ENCODE measurements at regions of chr10 and their contacts with region 1.

Region 1: GRCh38 chr10:102432162-102432950 is at the start of gene CUEDC2:
- DNase-seq: peak; percentile 98
- ATAC-seq: peak; percentile 96
- total RNA-seq, gene CUEDC2: 84.5 TPM

Region 2: DNA sequence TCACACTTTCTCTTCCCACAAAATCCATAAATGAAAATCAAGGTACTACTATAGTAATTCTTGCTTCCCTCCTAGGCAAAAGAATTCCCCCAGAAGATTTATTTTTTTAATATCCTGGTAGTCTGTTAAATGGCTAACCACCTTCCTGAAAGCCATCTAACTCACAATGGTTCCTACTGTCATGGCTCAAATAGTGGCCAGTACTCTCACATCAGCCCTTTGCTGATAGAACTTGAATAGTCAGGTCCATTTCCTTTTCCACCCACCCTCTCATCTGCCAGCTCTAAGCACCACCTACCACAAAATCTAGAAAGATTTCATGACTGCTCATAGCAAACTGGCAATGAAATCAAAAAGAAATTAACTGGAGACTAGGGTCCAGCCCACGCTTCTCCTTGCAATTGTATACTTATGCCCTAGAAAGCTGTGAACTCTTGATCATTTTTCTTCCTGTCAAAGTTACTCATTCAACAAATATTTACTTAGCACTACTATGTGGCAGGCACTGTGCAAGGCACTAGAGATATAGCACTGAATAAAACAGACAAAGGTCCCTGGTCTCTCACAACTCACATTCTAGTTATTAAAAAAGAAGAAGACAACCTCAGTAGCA is 436.8 kb before region 1 on chr10:
- intact Hi-C with region 1: no loop called
- DNase-seq: no peak
- ATAC-seq: no peak

Region 3: GRCh38 chr10:102175415-102175814 is 256.9 kb before region 1 on chr10:
- intact Hi-C with region 1: no loop called
- DNase-seq: no peak
- ATAC-seq: no peak

Region 4: GRCh38 chr10:102283488-102283887 is 148.9 kb before region 1 on chr10:
- intact Hi-C with region 1: no loop called
- DNase-seq: no peak
- ATAC-seq: no peak

Region 5: GRCh38 chr10:102384053-102384452 is 48.3 kb before region 1 on chr10:
- intact Hi-C with region 1: no loop called
- DNase-seq: no peak
- ATAC-seq: no peak

Region 6: GRCh38 chr10:102420810-102421644 is 11.3 kb before region 1 on chr10 and contains the start of gene FBXL15:
- intact Hi-C with region 1: loop called (anchors 1 kb)
- DNase-seq: peak; percentile 98
- ATAC-seq: peak; percentile 93
- total RNA-seq, gene FBXL15: 8.4 TPM

Region 7: DNA sequence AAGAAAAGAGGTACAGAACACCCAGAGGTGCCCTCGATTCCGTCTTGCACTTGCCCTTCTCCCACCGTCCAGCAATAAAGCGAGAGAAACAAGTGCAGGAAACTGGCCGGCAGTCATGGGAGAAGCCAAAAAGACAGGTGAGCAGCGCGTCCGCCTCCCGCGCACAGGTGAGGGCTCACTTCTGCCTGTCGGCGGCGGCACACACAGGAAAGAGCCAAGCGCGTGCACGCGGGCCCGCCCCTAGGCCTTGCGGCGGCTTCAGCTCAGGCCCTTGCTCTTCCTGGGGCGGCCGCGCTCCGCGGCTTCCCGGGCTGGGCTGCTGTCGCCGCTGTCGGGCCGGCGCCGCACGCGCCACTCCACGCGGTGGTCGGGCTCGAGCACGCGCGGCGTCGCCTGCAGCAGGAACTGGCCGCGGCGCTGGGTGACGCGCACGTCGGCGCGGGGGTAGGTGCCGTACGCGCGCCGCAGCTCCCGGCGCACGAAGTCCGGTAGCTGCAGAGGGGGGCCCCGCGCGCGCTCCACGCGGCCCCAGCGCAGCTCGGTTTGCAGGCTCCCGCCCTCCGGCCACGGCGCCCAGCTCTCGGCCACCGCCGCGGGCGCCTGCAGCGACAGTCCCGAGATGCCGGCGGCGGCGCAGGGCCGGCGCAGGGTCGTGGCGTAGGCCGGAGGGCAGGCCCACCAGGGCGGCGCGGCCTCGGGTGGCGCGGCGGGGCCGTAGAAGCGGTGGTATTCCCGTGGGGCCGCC is 18.0 kb after region 1 on chr10:
- intact Hi-C with region 1: loop called (anchors 2 kb)
- DNase-seq: peak; percentile 94
- ATAC-seq: peak; percentile 93